Prostate gland (tissue), 2 donors: ENCODE measurements at regions of chr11 and their contacts with region 1.

Region 1: GRCh38 chr11:44893846-44894617 is 56.7 kb downstream of the TP53I11 start:
- DNase-seq: peak; percentile 30
- H3K4me3 ChIP-seq: no peak overlapping the region
- H3K27ac ChIP-seq: peak overlapping the region; percentile 24 to 50
- H3K4me1 ChIP-seq: no peaks in the 10 kb centered on the region
- H3K27me3 ChIP-seq: no peaks in the 10 kb centered on the region
- CTCF ChIP-seq: peak; percentile 47 to 76 (median 68)
- POLR2A ChIP-seq: no peak

Region 2: DNA sequence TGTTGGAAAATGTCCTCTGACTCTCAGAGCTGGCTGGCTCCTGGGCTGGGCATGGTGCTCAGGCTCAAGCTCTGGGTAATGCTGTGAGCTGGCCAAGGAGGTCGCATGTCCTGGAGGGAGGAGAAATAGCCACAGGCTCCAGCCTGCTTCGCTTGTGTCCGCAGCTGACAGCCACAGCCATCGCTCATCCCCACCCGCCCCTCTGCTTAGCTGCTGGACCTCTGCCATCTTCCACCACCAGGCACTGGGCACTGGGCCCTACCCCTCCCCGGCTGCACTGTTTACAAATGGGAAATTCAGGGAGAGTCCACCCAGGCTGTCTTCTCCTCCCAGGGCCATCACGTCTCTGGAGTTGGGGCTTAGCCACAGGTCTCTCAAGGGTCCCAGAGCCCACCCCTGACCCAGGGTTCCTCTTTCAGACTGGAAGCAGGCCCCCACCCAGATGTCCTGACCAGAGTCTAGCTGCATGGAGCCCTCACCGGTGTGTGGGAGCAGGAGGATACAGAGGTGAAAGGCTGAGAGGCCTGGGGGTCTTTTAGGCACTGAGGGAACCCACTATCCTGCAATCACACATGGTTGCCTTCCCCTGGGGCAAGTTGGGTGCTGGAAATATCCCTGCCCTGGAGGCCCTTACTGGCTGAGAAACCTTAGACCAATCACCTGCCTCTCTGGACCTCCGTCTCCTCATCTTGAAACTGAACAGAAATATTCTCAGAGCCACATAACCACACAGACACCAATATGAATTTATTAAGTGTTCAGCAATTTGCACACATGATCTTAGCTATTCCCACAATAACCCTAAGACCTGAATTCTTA is 265.9 kb before region 1 on chr11:
- intact Hi-C with region 1: loop called (anchors 5 kb)
- DNase-seq: peak; percentile 47
- H3K4me3 ChIP-seq: no peak overlapping the region
- H3K27ac ChIP-seq: no peak overlapping the region
- H3K4me1 ChIP-seq: no peaks in the 10 kb centered on the region
- H3K27me3 ChIP-seq: no peaks in the 10 kb centered on the region
- CTCF ChIP-seq: no peak
- POLR2A ChIP-seq: no peak

Region 3: GRCh38 chr11:44804449-44805437 is 89.3 kb before region 1 on chr11:
- intact Hi-C with region 1: loop called (anchors 5 kb)
- DNase-seq: no peak
- H3K4me3 ChIP-seq: no peak overlapping the region
- H3K27ac ChIP-seq: peak overlapping the region; percentile 41 to 48
- H3K4me1 ChIP-seq: no peaks in the 10 kb centered on the region
- H3K27me3 ChIP-seq: no peaks in the 10 kb centered on the region
- CTCF ChIP-seq: no peak
- POLR2A ChIP-seq: no peak